ENCODE measurements at regions of chr5 and their contacts with region 1.

Region 1: GRCh38 chr5:38809388-38810359 is 36.1 kb upstream of the OSMR start:
- DNase-seq: peak; percentile 88
- H3K4me3 Mint-ChIP-seq: no peak overlapping the region
- H3K27ac Mint-ChIP-seq: no peak overlapping the region
- H3K4me1 Mint-ChIP-seq: peaks cover 31% of the 10 kb centered on the region
- H3K27me3 Mint-ChIP-seq: no peaks in the 10 kb centered on the region
- CTCF ChIP-seq: peak; percentile 84

Region 2: GRCh38 chr5:38265546-38266179 is 544.0 kb before region 1 on chr5:
- CTCF ChIA-PET with region 1: interaction called, 4 read pairs
- POLR2A ChIA-PET with region 1: no interaction called
- intact Hi-C with region 1: loop called (anchors 5 kb)
- DNase-seq: peak; percentile 61
- H3K4me3 Mint-ChIP-seq: no peak overlapping the region
- H3K27ac Mint-ChIP-seq: no peak overlapping the region
- H3K4me1 Mint-ChIP-seq: no peaks in the 10 kb centered on the region
- H3K27me3 Mint-ChIP-seq: peaks cover 52% of the 10 kb centered on the region
- CTCF ChIP-seq: peak; percentile 81

Region 3: DNA sequence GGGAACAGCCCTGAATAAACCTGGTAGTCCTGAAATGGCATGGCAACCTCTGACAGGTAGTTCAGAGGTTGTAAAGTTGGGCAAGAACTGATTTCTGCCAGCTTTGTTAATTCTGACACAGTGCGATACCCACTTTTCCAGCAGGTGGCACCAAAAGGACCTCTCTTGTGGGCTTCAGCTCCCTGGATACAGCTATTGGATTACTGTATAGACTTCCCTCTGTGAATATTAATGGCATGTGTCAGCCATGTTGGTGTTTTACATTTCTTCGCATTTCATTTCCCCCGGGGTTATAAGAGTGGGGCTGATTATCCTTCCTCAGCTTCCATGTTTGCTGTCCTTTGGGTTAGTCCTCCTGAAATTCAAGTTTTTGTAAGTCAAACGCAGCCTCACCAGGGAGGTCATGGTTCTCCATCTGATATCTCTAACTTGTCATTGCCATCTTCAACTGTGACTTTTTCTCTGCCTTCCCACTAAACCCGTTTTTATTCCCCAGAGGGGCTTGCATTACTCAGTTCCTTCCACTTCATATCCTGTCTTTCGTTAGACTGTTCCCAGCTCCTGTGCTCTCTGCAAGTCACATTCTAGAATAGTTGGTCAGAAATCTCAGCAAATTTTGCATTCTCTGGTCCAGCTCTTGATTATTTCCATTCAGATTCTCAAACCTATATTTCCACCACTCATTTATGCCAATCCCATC is 388.8 kb before region 1 on chr5:
- CTCF ChIA-PET with region 1: interaction called, 54 read pairs
- POLR2A ChIA-PET with region 1: no interaction called
- intact Hi-C with region 1: loop called (anchors 1 kb)
- DNase-seq: peak; percentile 84
- H3K4me3 Mint-ChIP-seq: no peak overlapping the region
- H3K27ac Mint-ChIP-seq: no peak overlapping the region
- H3K4me1 Mint-ChIP-seq: peaks cover 8% of the 10 kb centered on the region
- H3K27me3 Mint-ChIP-seq: no peaks in the 10 kb centered on the region
- CTCF ChIP-seq: peak; percentile 67

Region 4: GRCh38 chr5:38556599-38557305 is 252.9 kb before region 1 on chr5 and contains the start of gene LIFR:
- CTCF ChIA-PET with region 1: interaction called, 13 read pairs
- POLR2A ChIA-PET with region 1: interaction called, 9 read pairs
- intact Hi-C with region 1: loop called (anchors 2 kb)
- DNase-seq: peak; percentile 81
- H3K4me3 Mint-ChIP-seq: peak within 1 kb of the TSS; percentile 81
- H3K27ac Mint-ChIP-seq: peak within 1 kb of the TSS; percentile 33
- H3K4me1 Mint-ChIP-seq: no peaks in the 10 kb centered on the region
- H3K27me3 Mint-ChIP-seq: no peaks in the 10 kb centered on the region
- CTCF ChIP-seq: no peak
- total RNA-seq, gene LIFR: 3.7 and 3.9 TPM in 2 replicates

Region 5: GRCh38 chr5:38780950-38781349 is 28.7 kb before region 1 on chr5:
- CTCF ChIA-PET with region 1: interaction called, 14 read pairs
- POLR2A ChIA-PET with region 1: interaction called, 4 read pairs
- intact Hi-C with region 1: no loop called
- DNase-seq: peak; percentile 88
- H3K4me3 Mint-ChIP-seq: no peak overlapping the region
- H3K27ac Mint-ChIP-seq: no peak overlapping the region
- H3K4me1 Mint-ChIP-seq: peaks cover 29% of the 10 kb centered on the region
- H3K27me3 Mint-ChIP-seq: peaks cover 13% of the 10 kb centered on the region
- CTCF ChIP-seq: no peak

Region 6: GRCh38 chr5:38821679-38822078 is 12.0 kb after region 1 on chr5:
- CTCF ChIA-PET with region 1: interaction called, 16 read pairs
- POLR2A ChIA-PET with region 1: no interaction called
- intact Hi-C with region 1: no loop called
- DNase-seq: no peak
- H3K4me3 Mint-ChIP-seq: no peak overlapping the region
- H3K27ac Mint-ChIP-seq: no peak overlapping the region
- H3K4me1 Mint-ChIP-seq: peaks cover 14% of the 10 kb centered on the region
- H3K27me3 Mint-ChIP-seq: no peaks in the 10 kb centered on the region
- CTCF ChIP-seq: no peak

Region 7: DNA sequence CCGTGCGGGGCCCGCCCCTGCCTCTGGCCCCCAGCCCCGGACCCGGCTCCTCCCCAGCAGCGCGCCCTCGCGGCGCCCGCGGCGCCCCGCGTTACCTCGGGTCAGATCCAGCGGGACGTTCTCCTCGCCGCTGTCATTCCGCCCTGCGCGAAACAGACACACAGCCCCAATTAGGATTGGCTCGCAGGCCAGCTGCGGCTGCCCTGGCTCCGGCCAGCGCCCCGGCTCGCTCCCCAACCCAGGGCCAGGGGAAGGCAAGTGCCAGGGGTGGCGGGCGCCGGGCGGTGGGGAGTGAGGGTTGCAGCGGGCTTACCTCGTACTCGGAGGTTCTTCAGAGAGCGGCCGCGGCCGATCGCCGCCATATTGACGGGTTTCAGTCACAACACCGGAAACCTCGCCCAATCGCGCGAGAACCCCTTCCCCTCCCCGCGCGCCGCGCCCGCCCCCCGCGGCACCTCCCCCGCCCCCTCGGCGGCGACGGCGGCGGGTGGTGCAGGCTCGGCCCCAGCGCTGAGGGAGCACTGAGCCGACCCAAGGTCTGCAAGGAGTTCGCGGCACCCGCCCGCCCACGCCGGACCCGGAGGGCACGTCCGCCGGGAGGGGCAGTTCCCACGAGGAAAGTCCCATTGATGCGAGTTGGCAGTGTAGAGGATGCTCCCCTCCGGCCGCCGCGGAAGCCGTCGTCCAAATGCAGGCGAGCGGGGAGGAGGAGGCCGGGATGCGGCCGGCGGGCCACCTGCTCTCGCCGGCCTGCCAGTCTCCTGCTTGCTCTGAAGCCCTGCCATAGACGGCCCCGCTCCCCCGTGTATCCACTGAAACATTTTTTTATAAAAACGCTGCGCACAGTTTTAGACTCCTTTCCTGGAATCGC is 264.6 kb after region 1 on chr5 and contains the start of gene RICTOR:
- CTCF ChIA-PET with region 1: no interaction called
- POLR2A ChIA-PET with region 1: no interaction called
- intact Hi-C with region 1: no loop called
- DNase-seq: peak; percentile 88
- H3K4me3 Mint-ChIP-seq: peak within 1 kb of the TSS; percentile 94
- H3K27ac Mint-ChIP-seq: peak within 1 kb of the TSS; percentile 50
- H3K4me1 Mint-ChIP-seq: peaks cover 28% of the 10 kb centered on the region
- H3K27me3 Mint-ChIP-seq: no peaks in the 10 kb centered on the region
- CTCF ChIP-seq: no peak
- total RNA-seq, gene RICTOR: 24.8 and 25.7 TPM in 2 replicates